PC-3 (cell line): ENCODE measurements at regions of chr7 and their contacts with region 1.

Region 1: GRCh38 chr7:67535241-67535989 is 538.8 kb downstream of the TYW1 start:
- DNase-seq: no peak
- ATAC-seq: no peak
- H3K4me3 ChIP-seq: no peak overlapping the region
- H3K27ac ChIP-seq: no peak overlapping the region
- H3K4me1 ChIP-seq: no peaks in the 10 kb centered on the region
- H3K27me3 ChIP-seq: no peaks in the 10 kb centered on the region
- CTCF ChIP-seq: no peak

Region 2: DNA sequence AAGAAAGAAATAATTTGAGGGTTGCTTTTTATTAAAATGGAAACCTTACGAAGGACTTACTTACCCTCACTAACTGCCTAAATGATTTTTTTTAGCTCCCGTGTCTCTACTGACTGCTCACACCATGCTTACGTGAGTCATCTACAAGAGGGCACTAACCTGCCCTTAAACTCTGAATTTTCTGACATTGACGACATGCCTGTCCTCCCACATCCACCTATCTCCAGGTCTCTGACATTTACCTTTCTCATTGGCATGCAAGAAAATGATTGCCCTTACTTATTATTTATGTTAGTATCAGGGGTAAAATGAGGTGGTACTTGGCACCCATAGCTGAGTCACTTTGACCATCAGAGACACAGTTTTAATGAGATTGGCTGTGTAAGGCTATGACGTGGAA is 776.6 kb after region 1 on chr7:
- CTCF ChIA-PET with region 1: interaction called, 12 read pairs
- POLR2A ChIA-PET with region 1: no interaction called
- intact Hi-C with region 1: no loop called
- DNase-seq: no peak
- ATAC-seq: no peak
- H3K4me3 ChIP-seq: no peak overlapping the region
- H3K27ac ChIP-seq: no peak overlapping the region
- H3K4me1 ChIP-seq: no peaks in the 10 kb centered on the region
- H3K27me3 ChIP-seq: no peaks in the 10 kb centered on the region
- CTCF ChIP-seq: no peak